G401 (cell line): ENCODE measurements at regions of chr1 and their contacts with region 1.

Region 1: GRCh38 chr1:203351037-203352013 is at the start of gene FMOD:
- DNase-seq: no peak
- total RNA-seq, gene FMOD: not detected in 2 replicates

Region 2: GRCh38 chr1:203273206-203273868 is 78.0 kb before region 1 on chr1:
- in situ Hi-C with region 1: loop called (anchors 25 kb)
- DNase-seq: peak; percentile 92

Region 3: DNA sequence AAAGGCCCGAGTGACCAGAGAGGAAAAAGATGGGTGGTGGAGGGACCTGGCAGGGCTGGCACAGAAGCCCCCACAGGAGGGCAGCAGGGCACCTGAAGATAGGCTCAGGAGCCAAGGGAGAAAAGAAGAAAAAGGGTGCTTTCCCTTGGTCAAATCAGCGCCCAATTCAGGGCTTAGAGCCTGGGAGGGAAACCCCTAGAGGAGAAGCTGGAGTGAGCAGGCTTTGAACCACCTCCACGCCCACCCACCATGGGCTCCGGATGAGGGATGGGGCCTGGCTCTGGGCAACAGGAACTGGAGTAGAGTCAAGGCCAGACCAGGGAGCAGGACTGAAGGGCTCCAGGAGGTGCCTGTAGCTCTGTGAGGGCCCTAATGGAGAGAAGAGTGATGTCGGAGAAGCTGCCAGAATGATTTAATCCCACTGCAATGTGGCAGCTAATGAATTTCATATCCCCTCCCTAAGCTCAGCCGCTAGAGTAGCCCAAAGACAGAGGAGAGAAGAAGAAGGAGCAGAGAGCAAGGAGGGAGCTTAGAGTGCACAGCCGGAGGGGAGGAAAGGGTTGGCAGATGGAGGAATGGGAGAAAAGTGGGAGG is 112.2 kb after region 1 on chr1:
- in situ Hi-C with region 1: loop called (anchors 25 kb)
- DNase-seq: no peak